CD4-positive, alpha-beta T cell (primary cell): ENCODE measurements at regions of chr7 and their contacts with region 1.

Region 1: GRCh38 chr7:151403764-151404163 is 6.1 kb downstream of the WDR86 start:
- DNase-seq: no peak
- ATAC-seq: no peak
- H3K4me3 ChIP-seq: no peak overlapping the region
- H3K4me3 Mint-ChIP-seq: no peak overlapping the region
- H3K27ac ChIP-seq: no peak overlapping the region
- H3K27ac Mint-ChIP-seq: no peak overlapping the region
- H3K4me1 ChIP-seq: peaks cover 50% of the 10 kb centered on the region
- H3K4me1 Mint-ChIP-seq: peaks cover 4% of the 10 kb centered on the region
- H3K27me3 ChIP-seq: peaks cover 0 to 3% of the 10 kb centered on the region in 2 experiments
- H3K27me3 Mint-ChIP-seq: peaks cover 6% of the 10 kb centered on the region
- CTCF ChIP-seq: no peak

Region 2: GRCh38 chr7:151423936-151424335 is 20.2 kb after region 1 on chr7:
- CTCF ChIA-PET with region 1: no interaction called
- POLR2A ChIA-PET with region 1: no interaction called
- intact Hi-C with region 1: loop called in 1 of 2 experiments (anchors 2 kb)
- DNase-seq: no peak
- ATAC-seq: no peak
- H3K4me3 ChIP-seq: no peak overlapping the region
- H3K4me3 Mint-ChIP-seq: no peak overlapping the region
- H3K27ac ChIP-seq: no peak overlapping the region
- H3K27ac Mint-ChIP-seq: no peak overlapping the region
- H3K4me1 ChIP-seq: peaks cover 26% of the 10 kb centered on the region
- H3K4me1 Mint-ChIP-seq: peaks cover 14% of the 10 kb centered on the region
- H3K27me3 ChIP-seq: no peaks in the 10 kb centered on the region
- H3K27me3 Mint-ChIP-seq: no peaks in the 10 kb centered on the region
- CTCF ChIP-seq: no peak

Region 3: GRCh38 chr7:151592868-151593486 is 189.2 kb after region 1 on chr7:
- CTCF ChIA-PET with region 1: no interaction called
- POLR2A ChIA-PET with region 1: no interaction called
- intact Hi-C with region 1: no loop called
- DNase-seq: no peak
- ATAC-seq: no peak
- H3K4me3 ChIP-seq: no peak overlapping the region
- H3K4me3 Mint-ChIP-seq: no peak overlapping the region
- H3K27ac ChIP-seq: no peak overlapping the region
- H3K27ac Mint-ChIP-seq: no peak overlapping the region
- H3K4me1 ChIP-seq: no peaks in the 10 kb centered on the region
- H3K4me1 Mint-ChIP-seq: peaks cover 11% of the 10 kb centered on the region
- H3K27me3 ChIP-seq: no peaks in the 10 kb centered on the region
- H3K27me3 Mint-ChIP-seq: no peaks in the 10 kb centered on the region
- CTCF ChIP-seq: no peak